ENCODE measurements at regions of chr7 and their contacts with region 1.

Region 1: GRCh38 chr7:35694781-35695472 is at the start of gene HERPUD2:
- DNase-seq: peak; percentile 93
- H3K4me3 Mint-ChIP-seq: peak within 1 kb of the TSS; percentile 83
- H3K27ac Mint-ChIP-seq: peak within 1 kb of the TSS; percentile 95
- H3K4me1 Mint-ChIP-seq: peaks cover 42% of the 10 kb centered on the region
- H3K27me3 Mint-ChIP-seq: no peaks in the 10 kb centered on the region
- total RNA-seq, gene HERPUD2: 40.6 to 45.9 TPM

Region 2: DNA sequence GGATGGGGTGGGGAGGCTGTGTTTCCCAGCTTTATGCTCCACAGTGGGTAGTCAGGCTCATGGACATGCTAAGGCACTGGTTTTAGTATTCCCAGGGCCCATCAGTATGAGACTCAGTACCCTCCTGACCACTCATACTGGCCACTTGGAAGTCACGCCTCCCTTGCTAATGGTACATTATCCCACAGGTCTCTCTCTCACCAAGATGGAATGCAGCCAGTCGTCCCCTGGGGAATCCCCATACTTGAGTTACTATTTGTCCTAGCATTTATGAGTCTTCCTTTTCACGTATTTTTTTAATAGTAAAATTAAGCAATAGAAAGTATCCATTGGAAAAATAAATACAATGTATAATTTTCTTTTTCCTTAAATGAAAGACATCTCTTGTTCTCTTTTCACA is 360.4 kb before region 1 on chr7:
- CTCF ChIA-PET with region 1: no interaction called
- POLR2A ChIA-PET with region 1: no interaction called
- DNase-seq: no peak
- H3K4me3 Mint-ChIP-seq: no peak overlapping the region
- H3K27ac Mint-ChIP-seq: no peak overlapping the region
- H3K4me1 Mint-ChIP-seq: no peaks in the 10 kb centered on the region
- H3K27me3 Mint-ChIP-seq: peaks cover 5% of the 10 kb centered on the region

Region 3: GRCh38 chr7:35613096-35613495 is 81.8 kb before region 1 on chr7:
- CTCF ChIA-PET with region 1: no interaction called
- POLR2A ChIA-PET with region 1: no interaction called
- DNase-seq: no peak
- H3K4me3 Mint-ChIP-seq: no peak overlapping the region
- H3K27ac Mint-ChIP-seq: no peak overlapping the region
- H3K4me1 Mint-ChIP-seq: no peaks in the 10 kb centered on the region
- H3K27me3 Mint-ChIP-seq: no peaks in the 10 kb centered on the region

Region 4: GRCh38 chr7:35707422-35707821 is 12.5 kb after region 1 on chr7:
- CTCF ChIA-PET with region 1: interaction called, 70 read pairs
- POLR2A ChIA-PET with region 1: no interaction called
- DNase-seq: no peak
- H3K4me3 Mint-ChIP-seq: no peak overlapping the region
- H3K27ac Mint-ChIP-seq: no peak overlapping the region
- H3K4me1 Mint-ChIP-seq: peaks cover 29% of the 10 kb centered on the region
- H3K27me3 Mint-ChIP-seq: peaks cover 2% of the 10 kb centered on the region

Region 5: GRCh38 chr7:35761871-35762677 is 67.1 kb after region 1 on chr7:
- CTCF ChIA-PET with region 1: no interaction called
- POLR2A ChIA-PET with region 1: no interaction called
- DNase-seq: no peak
- H3K4me3 Mint-ChIP-seq: no peak overlapping the region
- H3K27ac Mint-ChIP-seq: no peak overlapping the region
- H3K4me1 Mint-ChIP-seq: peaks cover 2% of the 10 kb centered on the region
- H3K27me3 Mint-ChIP-seq: peaks cover 5% of the 10 kb centered on the region